Activated T-helper 2 cell treated with anti-CD3 and anti-CD28 coated beads, Interferon-gamma antibody, Interleukin-2, Interleukin-4, amounts not matched to agents 10 μg/mL and 5 μg/mL and 100 μg/mL, durations not matched to agents 14 hours and 24 hours and 36 hours (primary cell): ENCODE measurements at regions of chr6 and their contacts with region 1.

Region 1: DNA sequence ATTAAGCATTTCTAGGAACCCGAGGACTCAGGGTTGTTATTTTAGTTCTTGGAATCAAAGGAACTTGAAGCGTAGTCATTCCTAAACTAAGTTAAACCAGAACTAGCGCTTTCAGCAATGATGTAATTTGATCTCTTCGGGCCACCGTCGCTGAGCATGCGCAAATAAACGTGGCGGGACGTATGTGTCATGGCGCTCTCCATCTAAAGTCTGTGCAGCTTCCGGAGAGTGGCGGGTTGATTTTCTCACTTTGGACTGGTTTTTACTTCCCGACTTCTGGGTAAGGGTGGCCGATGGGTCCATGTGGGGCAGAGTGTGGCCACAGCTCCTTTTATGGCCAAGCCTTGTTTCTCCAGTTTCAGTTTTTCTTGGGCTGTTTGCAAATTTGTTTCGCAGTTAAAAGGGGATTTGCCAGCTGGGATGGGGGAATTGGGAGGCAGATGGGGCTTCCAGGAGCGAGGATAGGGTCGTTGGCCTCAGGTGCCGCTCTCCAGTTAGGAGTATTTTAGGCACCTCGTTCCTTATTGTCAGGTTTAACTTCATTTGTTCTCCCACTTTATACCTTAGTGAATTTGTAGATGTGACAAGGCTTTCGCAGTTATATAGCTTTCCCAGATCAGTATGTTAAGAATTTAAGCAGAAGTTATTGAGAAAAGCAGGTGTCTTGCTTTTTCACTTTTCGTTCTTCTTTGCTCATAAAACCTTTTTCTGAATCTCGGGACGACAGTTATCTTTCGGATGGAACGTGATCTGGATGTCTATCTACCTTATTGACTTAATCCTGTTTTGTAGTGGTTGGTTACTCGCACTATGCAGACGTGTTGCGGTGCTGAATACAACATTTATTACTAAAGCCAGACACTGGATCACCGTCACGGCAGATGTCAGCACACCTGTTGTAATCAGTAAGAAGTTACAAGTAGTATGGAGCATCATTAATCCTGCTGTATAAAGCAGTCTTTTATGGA is at the start of gene CDKAL1:
- DNase-seq: peak; percentile 91
- H3K4me3 Mint-ChIP-seq: peak within 1 kb of the TSS; percentile 93
- H3K27ac Mint-ChIP-seq: peak within 1 kb of the TSS; percentile 93
- H3K4me1 Mint-ChIP-seq: peaks cover 51% of the 10 kb centered on the region
- H3K27me3 Mint-ChIP-seq: no peaks in the 10 kb centered on the region
- total RNA-seq, gene CDKAL1: 30.5 and 31.2 TPM in 2 replicates

Region 2: DNA sequence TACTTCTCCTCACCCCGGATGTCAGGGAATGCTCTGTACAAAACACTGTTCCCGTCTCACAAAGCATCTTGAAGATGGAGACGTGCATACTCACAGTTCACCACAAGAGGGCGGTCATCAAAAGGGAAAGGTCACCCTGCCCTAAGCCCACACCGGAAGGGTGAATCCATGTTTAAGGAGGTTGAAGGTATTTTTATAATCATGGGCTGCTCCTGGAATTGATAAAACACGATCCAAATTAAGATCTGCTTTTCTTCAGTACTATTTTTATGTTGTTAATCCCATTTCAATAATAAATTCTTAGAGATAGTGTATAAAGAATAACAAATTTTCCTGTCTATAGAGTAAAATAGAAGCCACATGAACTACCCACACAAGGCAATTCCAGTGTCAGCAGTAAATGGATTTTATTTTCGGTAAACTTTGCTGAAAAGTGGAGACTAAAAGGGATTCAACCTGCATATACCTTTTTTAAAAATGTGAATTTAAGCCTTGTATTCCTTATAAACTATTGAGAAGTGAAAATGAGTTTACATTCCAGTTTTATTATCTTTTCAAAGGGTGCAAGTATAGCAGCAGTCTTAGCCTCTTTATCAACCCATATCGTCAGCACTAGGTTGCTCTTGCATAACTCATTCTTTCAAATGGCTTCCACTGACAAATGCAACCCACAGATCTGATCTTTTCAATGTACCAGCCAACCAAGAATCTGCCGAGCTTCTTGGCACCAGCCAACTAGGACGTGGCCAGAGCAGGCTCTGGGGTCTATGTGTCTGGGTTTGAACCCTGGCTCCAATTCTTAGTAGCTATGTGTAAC is 242.6 kb before region 1 on chr6:
- intact Hi-C with region 1: loop called (anchors 1 kb)
- DNase-seq: peak; percentile 63
- H3K4me3 Mint-ChIP-seq: no peak overlapping the region
- H3K27ac Mint-ChIP-seq: no peak overlapping the region
- H3K4me1 Mint-ChIP-seq: peaks cover 38% of the 10 kb centered on the region
- H3K27me3 Mint-ChIP-seq: no peaks in the 10 kb centered on the region